Right ventricle myocardium inferior (tissue), 1 donor: ENCODE measurements at regions of chr2 and their contacts with region 1.

Region 1: GRCh38 chr2:238379096-238379810 is 47.5 kb upstream of the ASB1 start:
- DNase-seq: no peak
- ATAC-seq: no peak

Region 2: DNA sequence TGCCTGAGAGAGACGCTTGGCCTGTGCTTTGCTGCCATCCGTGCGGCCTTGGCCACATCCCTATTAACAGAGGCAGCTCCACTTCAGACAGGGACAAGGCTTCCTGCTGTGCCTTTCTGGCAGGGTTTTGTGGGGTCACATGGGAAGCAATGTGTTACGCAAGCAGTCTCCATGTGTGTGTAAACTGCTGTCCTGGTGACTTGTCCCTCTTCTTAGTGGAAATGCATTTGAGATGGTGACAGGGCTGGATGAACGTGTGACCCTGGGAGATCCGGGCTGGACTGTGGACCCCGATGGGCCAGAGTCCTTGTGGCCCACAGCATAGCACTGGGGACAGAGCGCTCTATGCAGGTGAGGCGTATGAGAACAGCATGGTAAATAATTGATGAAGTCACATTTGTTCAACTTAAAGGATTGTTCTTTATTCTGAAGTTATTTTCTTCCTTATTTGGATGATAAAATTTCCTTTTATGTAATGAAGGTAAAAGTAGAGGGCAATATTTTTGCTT is 70.7 kb after region 1 on chr2:
- intact Hi-C with region 1: loop called (anchors 5 kb)
- DNase-seq: peak; percentile 80
- ATAC-seq: peak; percentile 92